ENCODE measurements at regions of chr10 and their contacts with region 1.

Region 1: GRCh38 chr10:63083904-63084689 is 49.0 kb upstream of the NRBF2 start:
- DNase-seq: peak; percentile 60
- ATAC-seq: peak; percentile 97

Region 2: DNA sequence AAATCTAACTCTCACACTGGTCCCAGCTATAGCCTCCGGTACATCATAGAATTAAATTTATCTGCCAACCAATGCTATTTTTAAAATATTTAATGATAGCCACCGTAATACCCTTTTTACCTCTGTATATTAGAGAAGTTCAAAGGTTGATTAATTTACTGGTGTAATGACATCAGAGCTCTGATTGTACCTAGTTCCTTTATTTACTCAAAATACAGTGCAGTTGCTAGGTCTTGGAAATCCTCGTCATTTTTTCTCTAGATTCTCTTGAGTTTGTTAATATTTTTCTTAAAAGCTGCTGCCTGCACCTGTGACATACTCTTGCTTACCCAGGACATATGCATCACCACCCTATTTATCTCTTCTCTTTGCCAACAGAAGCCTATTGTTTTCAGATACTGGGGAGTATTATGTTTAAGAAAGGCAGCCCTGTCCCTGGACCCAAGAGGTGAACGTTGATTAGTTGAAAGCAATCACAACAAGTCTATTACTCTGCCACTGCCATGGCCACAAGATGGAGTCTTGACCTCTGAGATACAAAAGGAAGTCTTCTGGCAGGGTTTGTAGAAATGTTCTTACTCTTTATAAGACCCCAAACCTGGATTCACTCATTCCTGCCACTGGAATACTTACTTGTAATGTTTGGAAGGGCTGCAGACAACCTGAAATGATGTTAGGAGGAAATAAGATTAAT is 1605.3 kb before region 1 on chr10:
- intact Hi-C with region 1: no loop called
- DNase-seq: no peak
- ATAC-seq: no peak

Region 3: DNA sequence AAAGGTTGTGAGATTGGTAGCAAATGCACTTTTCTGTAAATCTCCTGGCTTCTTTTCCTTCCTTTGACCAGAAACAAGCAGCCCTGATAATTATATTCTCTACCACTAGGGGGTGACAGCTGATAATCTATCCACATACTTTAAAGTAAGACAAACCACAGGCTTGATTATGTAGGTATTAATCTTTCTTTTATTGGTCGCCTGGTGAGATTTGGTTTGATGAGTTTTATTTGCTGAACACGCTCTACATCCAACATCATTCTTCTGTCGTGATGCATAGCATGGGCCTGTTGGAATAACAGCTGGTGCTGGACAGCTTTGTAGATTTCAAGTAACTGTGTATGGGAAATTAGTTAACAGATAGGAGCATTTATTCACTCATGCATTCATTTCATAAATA is 646.4 kb before region 1 on chr10:
- intact Hi-C with region 1: loop called (anchors 5 kb)
- DNase-seq: no peak
- ATAC-seq: peak; percentile 70

Region 4: GRCh38 chr10:62594093-62594520 is 490.0 kb before region 1 on chr10:
- intact Hi-C with region 1: loop called (anchors 5 kb)
- DNase-seq: peak; percentile 74
- ATAC-seq: peak; percentile 92

Region 5: GRCh38 chr10:63268798-63269503 is 184.9 kb after region 1 on chr10:
- intact Hi-C with region 1: no loop called
- DNase-seq: peak; percentile 68
- ATAC-seq: peak; percentile 94